Activated CD4-positive, alpha-beta T cell treated with anti-CD3 and anti-CD28 coated beads for 36 hours (primary cell): ENCODE measurements at regions of chr3 and their contacts with region 1.

Region 1: GRCh38 chr3:46297658-46298463 is 55.6 kb downstream of the CCR3 start:
- DNase-seq: peak; percentile 29
- ATAC-seq: no peak
- H3K4me3 Mint-ChIP-seq: no peak overlapping the region
- H3K27ac Mint-ChIP-seq: no peak overlapping the region
- H3K4me1 Mint-ChIP-seq: peaks cover 86% of the 10 kb centered on the region
- H3K27me3 Mint-ChIP-seq: peaks cover 22% of the 10 kb centered on the region

Region 2: DNA sequence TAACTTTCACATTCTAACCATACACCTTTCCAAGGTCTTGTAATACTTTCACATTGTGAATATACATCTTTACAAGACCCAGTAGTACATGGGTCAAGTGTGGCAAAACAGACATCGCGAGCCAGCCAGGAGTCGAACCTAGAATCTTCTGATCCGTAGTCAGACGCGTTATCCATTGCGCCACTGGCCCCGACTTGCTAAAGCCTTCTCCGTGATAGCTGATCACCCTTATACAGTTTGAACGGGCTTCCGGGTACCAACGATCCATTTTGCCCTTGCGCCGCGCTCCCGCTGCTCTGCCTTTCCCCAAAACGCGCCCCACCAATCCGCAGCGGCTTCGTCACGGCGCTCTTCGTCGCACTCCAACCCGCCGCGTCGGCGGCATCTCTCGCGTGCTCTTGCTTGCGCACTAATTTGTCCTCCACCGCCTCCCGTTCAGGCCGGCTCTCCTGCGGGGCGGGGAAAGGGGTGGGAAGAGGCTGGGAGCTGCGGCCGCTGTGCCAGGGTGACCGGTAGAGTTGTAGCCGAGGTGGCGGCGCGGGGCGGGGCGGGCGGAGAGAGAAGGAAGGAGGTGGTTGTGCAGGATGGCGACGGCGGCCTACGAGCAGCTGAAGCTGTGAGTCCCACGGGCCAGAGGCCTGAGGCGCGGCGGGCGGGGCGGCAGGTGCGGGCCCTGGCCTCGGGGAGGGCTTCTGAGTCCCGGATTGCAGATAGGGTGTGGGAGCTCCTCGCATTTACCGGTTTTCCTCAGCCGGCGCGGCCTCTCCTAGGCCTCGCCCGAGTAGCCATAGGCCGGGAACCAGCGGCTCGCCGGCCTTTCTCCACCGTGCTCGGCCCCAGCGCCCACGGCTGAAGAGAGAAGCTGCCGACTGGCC is 608.7 kb before region 1 on chr3 and contains the start of gene SACM1L:
- CTCF ChIA-PET with region 1: no interaction called
- POLR2A ChIA-PET with region 1: no interaction called
- intact Hi-C with region 1: loop called in 1 of 2 experiments (anchors 10 kb)
- DNase-seq: peak; percentile 98
- ATAC-seq: peak; percentile 85
- H3K4me3 Mint-ChIP-seq: peak within 1 kb of the TSS; percentile 79
- H3K27ac Mint-ChIP-seq: peak within 1 kb of the TSS; percentile 97
- H3K4me1 Mint-ChIP-seq: peaks cover 46% of the 10 kb centered on the region
- H3K27me3 Mint-ChIP-seq: peaks cover 2% of the 10 kb centered on the region
- total RNA-seq, gene SACM1L: 34.2 to 51.8 TPM

Region 3: GRCh38 chr3:45938864-45939263 is 359.0 kb before region 1 on chr3:
- CTCF ChIA-PET with region 1: no interaction called
- POLR2A ChIA-PET with region 1: no interaction called
- intact Hi-C with region 1: loop called in 1 of 2 experiments (anchors 2 kb)
- DNase-seq: peak; percentile 92
- ATAC-seq: peak; percentile 66
- H3K4me3 Mint-ChIP-seq: no peak overlapping the region
- H3K27ac Mint-ChIP-seq: no peak overlapping the region
- H3K4me1 Mint-ChIP-seq: peaks cover 27% of the 10 kb centered on the region
- H3K27me3 Mint-ChIP-seq: peaks cover 15% of the 10 kb centered on the region

Region 4: GRCh38 chr3:46208167-46208704 is 89.6 kb before region 1 on chr3 and contains the start of gene CCR1:
- CTCF ChIA-PET with region 1: no interaction called
- POLR2A ChIA-PET with region 1: no interaction called
- intact Hi-C with region 1: loop called in 1 of 2 experiments (anchors 5 kb)
- DNase-seq: peak; percentile 77
- ATAC-seq: peak; percentile 73
- H3K4me3 Mint-ChIP-seq: no peak within 1 kb of the TSS
- H3K27ac Mint-ChIP-seq: no peak within 1 kb of the TSS
- H3K4me1 Mint-ChIP-seq: peaks cover 16% of the 10 kb centered on the region
- H3K27me3 Mint-ChIP-seq: peaks cover 2% of the 10 kb centered on the region
- total RNA-seq, gene CCR1: 0.14 to 0.16 TPM

Region 5: DNA sequence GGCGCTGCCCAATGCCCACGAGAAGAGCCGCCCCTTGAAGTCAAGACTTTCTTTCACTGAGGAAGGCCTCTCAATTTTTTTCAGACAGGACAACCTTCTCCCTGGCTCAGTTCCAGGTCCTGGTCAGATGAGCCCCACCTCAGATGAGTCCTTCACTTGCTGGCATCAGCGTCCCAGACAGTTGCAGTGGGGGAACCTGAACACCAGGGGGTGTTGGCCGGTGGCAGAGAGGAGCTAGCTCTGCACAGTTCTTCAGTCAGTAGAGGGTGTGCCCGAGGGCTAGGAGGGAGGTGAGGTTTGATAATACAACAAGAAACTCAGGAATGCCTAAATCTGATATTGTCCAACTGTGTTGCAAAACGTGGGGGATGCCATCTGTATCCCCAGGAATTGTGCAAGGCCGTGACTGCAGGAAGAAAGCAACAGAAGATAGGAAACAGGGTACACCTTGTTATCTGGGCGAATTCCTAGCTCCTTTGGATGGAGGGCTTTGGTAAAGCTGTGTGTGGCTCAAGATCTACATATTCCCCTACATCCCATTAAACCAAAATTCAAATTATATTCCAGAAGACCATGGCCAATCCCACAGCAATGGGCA is 21.3 kb before region 1 on chr3:
- CTCF ChIA-PET with region 1: interaction called, 7 read pairs
- POLR2A ChIA-PET with region 1: no interaction called
- intact Hi-C with region 1: loop called (anchors 1 kb)
- DNase-seq: peak; percentile 86
- ATAC-seq: peak; percentile 81
- H3K4me3 Mint-ChIP-seq: no peak overlapping the region
- H3K27ac Mint-ChIP-seq: no peak overlapping the region
- H3K4me1 Mint-ChIP-seq: peaks cover 33% of the 10 kb centered on the region
- H3K27me3 Mint-ChIP-seq: peaks cover 31% of the 10 kb centered on the region

Region 6: DNA sequence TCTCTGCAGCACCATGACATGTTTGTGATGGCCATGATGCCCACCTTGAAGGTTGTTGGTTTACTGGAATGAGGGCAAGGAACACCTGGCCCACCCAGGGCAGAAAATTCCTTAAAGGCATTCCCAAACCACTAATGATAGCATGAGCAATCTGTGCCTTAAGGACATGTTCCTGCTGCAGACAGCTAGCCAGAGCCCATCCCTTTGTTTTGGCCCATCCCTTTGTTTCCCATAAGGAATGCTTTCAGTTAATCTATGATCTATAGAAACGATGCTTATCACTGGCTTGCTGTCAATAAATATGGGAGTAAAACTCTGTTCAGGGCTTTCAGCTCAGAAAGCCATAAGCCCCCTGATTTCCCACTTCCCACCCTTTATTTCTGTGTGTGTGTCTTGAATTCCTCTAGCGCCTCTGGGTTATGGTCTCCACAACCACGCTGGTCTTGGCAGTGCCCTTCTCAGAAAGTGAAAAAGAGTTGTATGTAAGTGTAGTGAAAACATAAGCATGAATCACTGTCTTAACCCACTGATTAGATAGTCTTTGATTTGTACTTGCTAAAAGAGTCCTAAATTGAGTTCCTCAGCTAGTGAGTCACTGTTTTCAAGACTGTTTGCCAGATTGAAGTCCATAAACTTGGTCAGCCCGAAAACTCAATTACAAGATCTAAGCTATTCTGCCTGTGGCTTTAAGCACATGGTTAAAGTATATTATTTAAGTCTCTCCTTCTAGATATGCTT is 37.0 kb after region 1 on chr3:
- CTCF ChIA-PET with region 1: interaction called, 6 read pairs
- POLR2A ChIA-PET with region 1: interaction called, 4 read pairs
- intact Hi-C with region 1: loop called in 1 of 2 experiments (anchors 2 kb)
- DNase-seq: peak; percentile 24
- ATAC-seq: peak; percentile 93
- H3K4me3 Mint-ChIP-seq: no peak overlapping the region
- H3K27ac Mint-ChIP-seq: no peak overlapping the region
- H3K4me1 Mint-ChIP-seq: peaks cover 8% of the 10 kb centered on the region
- H3K27me3 Mint-ChIP-seq: peaks cover 27% of the 10 kb centered on the region

Region 7: GRCh38 chr3:46538803-46539442 is 241.1 kb after region 1 on chr3:
- CTCF ChIA-PET with region 1: no interaction called
- POLR2A ChIA-PET with region 1: no interaction called
- intact Hi-C with region 1: loop called in 1 of 2 experiments (anchors 2 kb)
- DNase-seq: peak; percentile 86
- ATAC-seq: peak; percentile 89
- H3K4me3 Mint-ChIP-seq: peak overlapping the region; percentile 54
- H3K27ac Mint-ChIP-seq: peak overlapping the region; percentile 83
- H3K4me1 Mint-ChIP-seq: peaks cover 60% of the 10 kb centered on the region
- H3K27me3 Mint-ChIP-seq: no peaks in the 10 kb centered on the region

Region 8: GRCh38 chr3:47016934-47017435 is 719.1 kb after region 1 on chr3:
- CTCF ChIA-PET with region 1: no interaction called
- POLR2A ChIA-PET with region 1: no interaction called
- intact Hi-C with region 1: no loop called
- DNase-seq: peak; percentile 62
- ATAC-seq: peak; percentile 79
- H3K4me3 Mint-ChIP-seq: peak overlapping the region; percentile 24
- H3K27ac Mint-ChIP-seq: peak overlapping the region; percentile 85
- H3K4me1 Mint-ChIP-seq: peaks cover 46% of the 10 kb centered on the region
- H3K27me3 Mint-ChIP-seq: no peaks in the 10 kb centered on the region